Natural killer cell (primary cell): ENCODE measurements at regions of chr5 and their contacts with region 1.

Region 1: DNA sequence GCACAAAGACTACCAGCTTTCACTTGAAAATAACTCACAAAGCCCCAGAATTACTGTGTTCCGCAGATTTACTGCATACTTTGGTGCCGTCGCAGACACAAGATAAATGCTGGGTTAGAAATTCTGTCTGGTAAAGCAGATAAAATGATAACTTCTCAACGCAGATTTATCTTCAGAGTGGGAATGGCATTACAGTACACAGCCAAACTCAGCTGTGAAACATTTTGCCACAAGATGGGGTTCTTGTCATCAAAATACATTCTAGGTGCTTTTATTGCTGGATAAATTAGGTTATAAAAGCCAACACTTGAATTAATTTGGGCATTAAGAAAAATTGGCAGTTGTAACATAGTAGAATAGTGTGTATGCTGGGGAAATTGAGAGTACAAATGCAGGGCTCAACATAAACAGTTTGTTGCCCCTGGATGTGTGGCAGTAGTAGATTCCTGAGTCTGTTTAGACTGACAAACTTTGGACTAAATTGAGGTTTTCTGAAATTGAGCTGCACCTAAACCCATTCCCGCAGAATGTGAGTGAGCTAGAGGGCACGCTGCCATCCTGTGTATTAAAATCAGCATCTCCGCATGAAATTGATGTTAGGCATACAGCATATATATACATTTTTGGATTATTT is 61.1 kb downstream of the LMNB1 start:
- DNase-seq: peak in 1 of 2 donors; percentile 50
- ATAC-seq: peak in 2 of 3 donors; percentile 52 to 56
- H3K4me3 ChIP-seq: no peak overlapping the region
- H3K4me3 Mint-ChIP-seq: no peak overlapping the region
- H3K27ac ChIP-seq: no peak overlapping the region
- H3K27ac Mint-ChIP-seq: peak overlapping the region in 1 of 2 donors; percentile 31
- H3K4me1 ChIP-seq: no peaks in the 10 kb centered on the region
- H3K4me1 Mint-ChIP-seq: peaks cover 0 to 8% of the 10 kb centered on the region in 2 donors
- H3K27me3 ChIP-seq: no peaks in the 10 kb centered on the region
- H3K27me3 Mint-ChIP-seq: no peaks in the 10 kb centered on the region
- CTCF ChIP-seq: peak; percentile 42

Region 2: GRCh38 chr5:127313847-127314473 is 475.9 kb after region 1 on chr5:
- intact Hi-C with region 1: loop called (anchors 1 kb)
- DNase-seq: peak; percentile 43 to 76
- ATAC-seq: peak; percentile 73 to 85 (median 82)
- H3K4me3 ChIP-seq: no peak overlapping the region
- H3K4me3 Mint-ChIP-seq: no peak overlapping the region
- H3K27ac ChIP-seq: no peak overlapping the region
- H3K27ac Mint-ChIP-seq: no peak overlapping the region
- H3K4me1 ChIP-seq: no peaks in the 10 kb centered on the region
- H3K4me1 Mint-ChIP-seq: no peaks in the 10 kb centered on the region
- H3K27me3 ChIP-seq: no peaks in the 10 kb centered on the region
- H3K27me3 Mint-ChIP-seq: peaks cover 6 to 13% of the 10 kb centered on the region in 2 donors
- CTCF ChIP-seq: peak; percentile 82